Left ventricle myocardium superior (tissue), 1 donor: ENCODE measurements at regions of chr2 and their contacts with region 1.

Region 1: DNA sequence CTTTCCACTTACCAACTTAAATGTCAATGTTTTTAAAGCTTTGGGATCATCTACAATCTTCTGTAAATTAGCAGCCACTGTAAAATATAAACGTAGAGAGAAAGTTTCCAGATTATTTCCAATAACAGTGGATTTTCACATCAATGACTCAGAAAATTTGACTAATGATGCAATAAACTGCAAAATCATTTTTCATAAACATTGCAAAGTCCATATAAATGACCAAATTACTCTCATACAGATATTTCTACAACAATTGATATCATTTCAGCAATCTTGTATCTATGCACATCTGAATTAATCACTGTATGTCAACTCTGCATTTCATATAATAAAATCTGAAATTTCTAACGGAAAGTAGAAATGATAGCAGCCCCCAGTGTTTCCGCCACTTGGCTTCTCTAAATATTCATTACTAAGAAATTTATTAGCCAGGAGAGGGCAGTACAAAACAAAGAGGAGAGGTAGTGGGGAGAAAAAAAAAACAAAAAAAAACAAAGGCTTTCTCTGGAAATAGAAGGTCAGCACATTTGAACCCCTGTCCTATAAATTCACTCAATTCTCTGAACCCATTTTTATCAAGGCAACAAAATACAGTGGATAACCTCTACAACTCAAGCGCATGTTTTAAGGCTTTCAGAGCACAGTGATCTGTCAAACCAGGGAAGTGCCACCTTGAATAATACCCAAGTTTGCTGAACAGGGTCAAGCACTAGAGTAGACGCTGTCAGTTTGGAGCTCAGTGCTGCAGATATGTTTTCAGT is 282.6 kb downstream of the STK39 start:
- DNase-seq: no peak
- ATAC-seq: peak; percentile 46

Region 2: GRCh38 chr2:168118733-168119514 is 154.1 kb after region 1 on chr2:
- intact Hi-C with region 1: loop called (anchors 10 kb)
- DNase-seq: no peak
- ATAC-seq: peak; percentile 75